IMR-90 (cell line): ENCODE measurements at regions of chr14 and their contacts with region 1.

Region 1: GRCh38 chr14:32813401-32813800 is 125.3 kb upstream of the NPAS3 start:
- DNase-seq: no peak
- ATAC-seq: no peak
- H3K4me3 ChIP-seq: no peak overlapping the region
- H3K27ac ChIP-seq: no peak overlapping the region
- H3K4me1 ChIP-seq: no peaks in the 10 kb centered on the region
- H3K27me3 ChIP-seq: no peaks in the 10 kb centered on the region; the same call in 1 of the 2 replicates
- CTCF ChIP-seq: no peak
- POLR2A ChIP-seq: no peak
- RAD21 ChIP-seq: no peak

Region 2: DNA sequence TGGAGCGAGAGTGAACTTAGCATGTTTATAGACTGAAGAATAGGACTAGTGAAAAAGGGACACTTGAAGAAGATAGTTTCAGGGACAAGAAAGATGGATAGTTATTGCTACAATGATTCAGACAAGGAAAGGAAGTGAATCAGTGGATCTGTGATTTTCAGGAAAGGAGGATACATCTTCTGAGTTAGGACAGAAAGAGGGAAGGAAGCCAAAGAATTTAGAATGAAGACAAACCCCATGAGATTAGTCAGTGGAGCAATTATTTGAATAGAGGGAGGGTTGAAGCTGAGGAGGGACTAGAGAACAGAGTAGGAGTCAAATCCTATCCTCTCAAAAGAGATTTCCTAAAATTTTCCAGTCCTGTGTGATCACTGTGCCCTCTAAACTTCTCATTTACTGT is 201.6 kb before region 1 on chr14:
- CTCF ChIA-PET with region 1: no interaction called
- POLR2A ChIA-PET with region 1: no interaction called
- dilution Hi-C with region 1: no loop called
- in situ Hi-C with region 1: no loop called
- intact Hi-C with region 1: loop called (anchors 10 kb)
- DNase-seq: peak; percentile 80
- ATAC-seq: peak; percentile 80
- H3K4me3 ChIP-seq: no peak overlapping the region
- H3K27ac ChIP-seq: no peak overlapping the region
- H3K4me1 ChIP-seq: no peaks in the 10 kb centered on the region
- H3K27me3 ChIP-seq: no peaks in the 10 kb centered on the region
- CTCF ChIP-seq: no peak
- POLR2A ChIP-seq: no peak
- RAD21 ChIP-seq: no peak

Region 3: GRCh38 chr14:32662211-32662610 is 151.2 kb before region 1 on chr14:
- CTCF ChIA-PET with region 1: no interaction called
- POLR2A ChIA-PET with region 1: no interaction called
- dilution Hi-C with region 1: no loop called
- in situ Hi-C with region 1: no loop called
- intact Hi-C with region 1: no loop called
- DNase-seq: no peak
- ATAC-seq: no peak
- H3K4me3 ChIP-seq: no peak overlapping the region
- H3K27ac ChIP-seq: no peak overlapping the region
- H3K4me1 ChIP-seq: no peaks in the 10 kb centered on the region
- H3K27me3 ChIP-seq: no peaks in the 10 kb centered on the region
- CTCF ChIP-seq: no peak
- POLR2A ChIP-seq: no peak
- RAD21 ChIP-seq: no peak

Region 4: DNA sequence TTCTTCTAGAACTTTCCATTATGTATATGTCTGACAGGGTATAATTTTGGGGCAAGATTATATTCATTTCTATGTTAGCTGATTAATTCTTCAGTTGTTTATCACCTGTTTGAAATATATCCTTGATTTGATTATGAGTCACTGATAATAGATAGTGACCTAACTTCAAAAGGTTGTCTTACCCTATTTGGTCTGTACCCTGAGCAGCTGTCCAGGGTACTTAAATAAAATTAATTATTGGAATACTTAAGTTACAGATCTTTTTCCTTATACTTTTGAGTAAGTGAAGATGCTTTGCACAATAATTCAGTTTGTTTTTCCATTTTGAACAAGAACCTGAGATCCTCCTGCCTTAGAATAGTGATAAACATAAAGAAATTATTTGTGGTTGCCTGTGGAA is 112.0 kb after region 1 on chr14:
- CTCF ChIA-PET with region 1: no interaction called
- POLR2A ChIA-PET with region 1: no interaction called
- dilution Hi-C with region 1: no loop called
- in situ Hi-C with region 1: no loop called
- intact Hi-C with region 1: no loop called
- DNase-seq: no peak
- ATAC-seq: no peak
- H3K4me3 ChIP-seq: no peak overlapping the region
- H3K27ac ChIP-seq: no peak overlapping the region
- H3K4me1 ChIP-seq: no peaks in the 10 kb centered on the region
- H3K27me3 ChIP-seq: no peaks in the 10 kb centered on the region
- CTCF ChIP-seq: no peak
- POLR2A ChIP-seq: no peak
- RAD21 ChIP-seq: no peak